Lower leg skin (tissue), 4 donors: ENCODE measurements at regions of chr21 and their contacts with region 1.

Region 1: GRCh38 chr21:39313571-39314142 is at the start of gene BRWD1:
- DNase-seq: peak; percentile 66 to 96
- H3K4me3 ChIP-seq: peak within 1 kb of the TSS; percentile 87
- CTCF ChIP-seq: peak in 1 of 3 donors; percentile 68
- POLR2A ChIP-seq: no peak
- total RNA-seq, gene BRWD1: 42.2 to 57.2 (median 52.6) TPM

Region 2: DNA sequence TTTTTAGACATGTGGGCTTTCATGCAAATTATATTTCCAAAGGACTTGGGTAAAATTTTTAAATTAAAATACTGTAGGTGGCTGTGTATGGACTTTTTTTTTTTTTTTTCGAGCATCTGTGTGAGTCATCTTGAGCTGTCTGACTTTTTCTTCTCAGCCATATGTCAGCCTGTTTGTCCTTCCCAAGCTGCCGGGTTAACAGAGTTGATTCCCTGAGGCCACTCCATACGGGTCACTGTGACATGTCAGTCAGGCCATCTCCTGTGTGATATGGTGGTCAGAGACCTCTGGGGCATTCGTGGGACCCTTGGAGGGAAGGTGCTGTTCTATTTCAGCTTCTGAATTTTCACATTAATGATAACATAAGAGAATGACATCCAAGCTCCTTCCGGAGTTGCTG is 1545.7 kb before region 1 on chr21:
- intact Hi-C with region 1: no loop called
- DNase-seq: no peak
- H3K4me3 ChIP-seq: no peak overlapping the region
- CTCF ChIP-seq: no peak
- POLR2A ChIP-seq: no peak

Region 3: DNA sequence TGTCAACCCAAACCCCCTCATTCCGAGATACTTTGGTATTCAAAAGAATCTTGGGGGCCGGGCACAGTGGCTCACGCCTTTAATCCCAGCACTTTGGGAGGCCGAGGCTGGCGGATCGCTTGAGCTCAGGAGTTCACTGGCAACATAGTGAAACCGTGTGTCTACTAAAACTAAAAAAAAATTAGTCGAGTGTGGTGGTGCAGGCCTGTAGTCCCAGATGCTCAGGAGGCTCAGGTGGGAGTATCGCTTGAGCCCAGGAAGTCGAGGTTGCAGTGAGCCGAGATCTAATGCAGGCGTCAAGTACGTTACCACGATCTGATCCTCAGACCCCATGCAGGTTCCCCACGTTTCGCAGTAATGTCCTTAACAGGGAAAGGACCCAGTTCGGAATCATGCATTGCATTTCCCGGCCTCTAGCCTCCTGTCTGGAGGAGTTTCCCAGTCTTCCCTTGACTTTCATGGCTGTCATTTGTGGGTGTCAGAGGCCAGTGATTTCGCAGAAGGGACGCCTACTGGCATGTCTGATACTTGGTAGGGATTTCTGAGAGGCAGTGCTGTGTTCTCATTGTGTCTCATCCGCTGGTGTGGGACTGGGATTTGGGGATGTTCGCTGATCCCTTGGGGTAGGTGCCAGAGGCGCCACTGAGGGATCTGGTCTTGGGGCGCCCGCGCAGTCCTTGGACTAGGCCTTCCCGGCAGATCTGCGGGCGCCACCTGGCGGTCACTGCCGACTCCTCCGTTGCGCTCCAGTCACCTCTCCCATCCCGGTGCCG is 74.6 kb after region 1 on chr21:
- intact Hi-C with region 1: loop called (anchors 5 kb)
- DNase-seq: peak; percentile 87 to 98
- H3K4me3 ChIP-seq: peak overlapping the region; percentile 4
- CTCF ChIP-seq: peak in 1 of 3 donors; percentile 69
- POLR2A ChIP-seq: no peak